ENCODE measurements at regions of chr21 and their contacts with region 1.

Region 1: DNA sequence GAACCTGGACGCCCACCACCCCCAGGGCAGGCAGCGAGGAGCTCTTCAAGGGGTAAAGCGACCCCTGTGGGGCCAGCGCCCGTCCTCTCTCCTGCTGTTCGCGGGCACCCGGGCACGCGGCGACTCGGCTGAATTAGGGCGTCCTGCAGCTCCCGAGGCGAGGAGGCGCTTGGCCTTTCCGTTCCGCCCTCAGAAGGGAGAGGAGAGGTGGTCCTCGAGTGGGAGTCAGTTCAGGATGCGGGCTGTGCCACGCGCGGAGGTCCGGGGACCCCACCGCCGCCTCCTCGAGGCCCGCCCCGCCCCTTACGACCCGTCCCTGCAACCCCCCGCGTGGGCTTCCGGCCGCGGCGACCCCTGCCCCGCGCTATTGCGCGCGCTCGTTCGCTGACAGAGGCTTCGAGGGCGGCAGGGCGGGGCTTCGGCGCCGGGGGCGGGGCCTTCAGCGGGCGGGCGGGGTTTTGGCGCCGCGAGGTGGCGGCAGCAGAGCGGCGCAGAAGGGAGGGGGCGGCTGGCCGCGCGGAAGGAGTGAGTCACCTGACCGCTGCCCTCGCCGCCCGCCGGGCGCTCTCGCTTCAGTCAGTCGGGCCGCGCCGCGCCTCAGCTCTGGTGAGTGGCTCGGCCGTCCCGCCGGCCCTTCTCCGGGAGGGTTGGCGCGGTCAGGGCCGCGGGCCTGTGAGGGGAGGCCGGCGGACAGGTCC is at the start of gene BACH1:
- DNase-seq: peak; percentile 59 to 93
- H3K4me3 ChIP-seq: peak within 1 kb of the TSS; percentile 77 to 94 (median 88)
- H3K27ac ChIP-seq: peak within 1 kb of the TSS; percentile 61; the same call in 1 of the 2 replicates
- H3K4me1 ChIP-seq: peaks cover 0 to 14% (median 9%) of the 10 kb centered on the region in 4 experiments; a peak in 5 of 7 replicates
- H3K27me3 ChIP-seq: peaks cover 0 to 7% (median 4%) of the 10 kb centered on the region in 4 experiments; a peak in 3 of 7 replicates
- CTCF ChIP-seq: 0 out of 4 replicates have a peak, but pooled peaks of 1 of the 3 experiments have one; percentile 11
- EP300 ChIP-seq: no peak
- POLR2A ChIP-seq: peak; percentile 94
- RAD21 ChIP-seq: peak; percentile 41 to 48; a peak in 3 of 4 replicates
- total RNA-seq, gene BACH1: 50.7 and 57.1 TPM in 2 replicates

Region 2: GRCh38 chr21:29248124-29248523 is 50.4 kb before region 1 on chr21:
- CTCF ChIA-PET with region 1: no interaction called
- POLR2A ChIA-PET with region 1: no interaction called
- DNase-seq: no peak
- H3K4me3 ChIP-seq: no peak overlapping the region
- H3K27ac ChIP-seq: no peak overlapping the region
- H3K4me1 ChIP-seq: no peaks in the 10 kb centered on the region
- H3K27me3 ChIP-seq: no peaks in the 10 kb centered on the region
- CTCF ChIP-seq: no peak
- EP300 ChIP-seq: no peak
- POLR2A ChIP-seq: no peak
- RAD21 ChIP-seq: no peak

Region 3: DNA sequence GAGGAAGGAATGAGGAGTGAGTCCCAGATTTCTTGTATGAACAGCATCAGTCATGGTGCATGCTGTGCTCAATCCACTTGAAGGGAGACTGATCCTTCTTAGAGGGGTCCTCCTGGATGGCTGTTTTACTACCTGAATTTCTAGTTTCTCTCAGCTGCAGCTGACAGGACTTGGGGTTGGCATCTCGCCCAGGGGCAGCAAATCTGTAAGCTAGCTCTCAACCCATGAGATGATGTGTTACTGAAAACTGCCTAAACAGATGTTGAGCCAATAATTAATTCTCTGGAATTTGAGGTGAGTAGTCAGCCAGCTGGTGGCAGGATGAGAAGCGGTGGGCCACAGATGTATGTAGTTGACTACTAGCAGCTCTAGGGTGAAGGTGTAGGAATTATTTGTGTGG is 19.9 kb after region 1 on chr21:
- CTCF ChIA-PET with region 1: interaction called, 4 read pairs
- POLR2A ChIA-PET with region 1: interaction called, 10 read pairs
- DNase-seq: no peak
- H3K4me3 ChIP-seq: no peak overlapping the region
- H3K27ac ChIP-seq: no peak overlapping the region
- H3K4me1 ChIP-seq: no peaks in the 10 kb centered on the region; a peak in 1 of 7 replicates
- H3K27me3 ChIP-seq: no peaks in the 10 kb centered on the region
- CTCF ChIP-seq: no peak
- EP300 ChIP-seq: no peak
- POLR2A ChIP-seq: no peak
- RAD21 ChIP-seq: no peak